H1 (cell line): ENCODE measurements at regions of chr10 and their contacts with region 1.

Region 1: DNA sequence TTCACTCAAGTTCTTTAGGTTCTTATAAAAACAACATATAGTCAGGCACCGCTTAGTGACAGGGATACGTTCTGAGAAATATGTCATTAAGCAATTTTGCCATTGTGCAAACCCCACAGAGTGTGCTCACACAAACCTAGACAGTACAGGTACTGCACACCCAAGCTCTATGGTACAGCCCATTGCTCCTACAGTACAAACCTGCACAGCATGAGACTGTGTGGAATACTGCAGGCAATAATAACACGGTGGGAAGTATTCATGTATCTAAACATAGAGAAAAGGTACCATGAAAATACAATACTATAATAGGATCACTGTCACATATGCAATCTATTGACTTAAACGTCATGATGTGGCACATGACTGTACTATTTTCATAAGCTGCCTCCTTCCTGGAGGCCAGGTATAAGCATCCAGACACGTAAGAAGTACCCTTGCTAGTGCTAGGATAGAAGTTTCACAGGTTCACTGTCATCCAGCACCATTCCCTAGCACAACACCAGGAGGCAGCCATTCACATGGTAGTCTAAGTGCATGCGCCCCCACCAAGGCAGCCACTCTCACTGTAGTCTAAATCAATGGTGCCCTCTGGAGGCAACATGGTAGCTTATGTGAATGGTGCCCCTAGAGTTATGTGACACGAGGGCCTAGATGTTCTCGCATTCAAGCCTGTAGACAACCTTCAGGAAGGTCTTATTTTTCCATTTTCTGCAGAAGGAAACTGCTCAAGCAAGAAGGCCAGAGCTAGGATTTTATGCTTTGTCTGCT is 98.5 kb downstream of the ARHGAP22 start:
- DNase-seq: peak in 1 of 2 experiments; percentile 31
- H3K4me3 ChIP-seq: no peak overlapping the region
- H3K27ac ChIP-seq: no peak overlapping the region
- H3K4me1 ChIP-seq: peaks cover 2 to 5% (median 3%) of the 10 kb centered on the region in 4 experiments; a peak in 4 of 7 replicates
- H3K27me3 ChIP-seq: no peaks in the 10 kb centered on the region
- CTCF ChIP-seq: peak; percentile 6 to 22 (median 19); a peak in 3 of 4 replicates
- EP300 ChIP-seq: no peak
- POLR2A ChIP-seq: no peak
- RAD21 ChIP-seq: peak; percentile 31 to 32

Region 2: DNA sequence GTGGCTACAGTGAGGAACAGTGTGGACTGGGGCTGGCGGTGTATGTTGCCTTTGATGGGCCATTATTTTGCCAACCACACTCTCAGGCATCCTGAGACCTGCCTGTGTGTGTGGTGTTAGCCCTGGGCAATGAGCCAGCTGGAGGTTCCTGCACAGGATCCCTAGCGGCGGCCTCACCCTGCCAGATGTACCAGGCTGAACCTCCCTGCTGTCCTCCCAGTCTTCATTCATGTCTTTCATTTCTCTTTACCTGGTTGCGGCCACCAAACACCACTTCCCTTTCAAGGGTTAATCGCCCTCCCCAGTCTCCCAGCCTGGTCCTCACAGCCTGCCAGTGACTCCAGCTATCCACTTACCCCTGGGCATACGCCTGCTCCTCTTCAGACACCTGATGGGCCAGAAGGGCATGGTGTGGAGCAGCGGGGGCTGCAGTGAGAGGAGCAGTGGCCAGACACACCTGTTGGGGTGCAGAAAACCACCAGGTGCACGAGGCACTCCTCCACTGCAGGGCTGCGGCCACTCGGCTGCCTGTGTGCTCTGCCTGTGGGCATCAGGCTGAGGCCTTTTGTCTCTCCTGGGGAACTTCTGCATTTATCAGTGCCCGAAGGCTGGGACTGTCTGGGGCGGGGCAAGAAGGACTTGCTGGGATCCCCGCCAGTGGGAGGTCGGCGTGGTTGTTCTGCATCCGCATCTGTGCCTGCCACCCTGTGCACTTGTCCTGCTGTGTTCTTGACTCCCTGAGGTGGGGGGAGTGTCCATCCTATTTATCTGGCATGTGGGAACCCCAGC is 13.1 kb before region 1 on chr10:
- CTCF ChIA-PET with region 1: interaction called, 87 read pairs
- POLR2A ChIA-PET with region 1: no interaction called
- DNase-seq: peak in 1 of 2 experiments; percentile 42
- H3K4me3 ChIP-seq: no peak overlapping the region
- H3K27ac ChIP-seq: no peak overlapping the region
- H3K4me1 ChIP-seq: no peaks in the 10 kb centered on the region; a peak in 1 of 7 replicates
- H3K27me3 ChIP-seq: no peaks in the 10 kb centered on the region
- CTCF ChIP-seq: no peak
- EP300 ChIP-seq: no peak
- POLR2A ChIP-seq: no peak
- RAD21 ChIP-seq: no peak